ENCODE measurements at regions of chr4 and their contacts with region 1.

Region 1: DNA sequence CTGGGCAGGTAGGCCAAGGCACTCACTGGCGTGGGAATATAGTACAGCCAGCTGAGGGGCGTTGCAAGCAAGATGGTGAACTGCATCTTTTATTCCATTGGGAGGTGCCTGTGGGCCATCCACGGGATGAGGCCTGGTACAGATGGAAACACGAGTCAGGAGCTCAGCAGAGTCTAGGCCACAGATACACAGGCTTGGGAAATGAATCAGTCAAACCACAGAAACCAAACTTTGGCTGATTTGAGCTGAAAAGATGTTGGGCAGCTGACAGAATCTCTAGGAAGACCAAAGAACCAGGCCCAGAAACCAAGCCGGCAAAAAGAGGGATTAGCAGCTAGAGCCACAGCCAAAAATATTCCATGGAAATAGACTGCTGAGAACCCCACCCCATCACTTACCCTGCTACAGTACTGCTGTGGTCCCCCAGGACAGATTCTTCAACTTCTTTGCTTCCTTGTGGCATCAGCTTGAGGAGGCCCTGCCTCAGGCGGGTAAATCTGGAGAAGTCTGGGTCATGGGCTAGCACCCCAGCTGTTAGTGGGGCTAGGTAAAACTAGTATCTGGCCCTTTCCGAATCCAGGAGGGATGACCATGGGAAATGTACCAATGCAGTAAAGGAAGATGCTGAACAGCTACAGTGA is 75.4 kb downstream of the TMEM131L start:
- DNase-seq: peak; percentile 82
- H3K4me3 ChIP-seq: no peak overlapping the region
- CTCF ChIP-seq: peak; percentile 26

Region 2: GRCh38 chr4:153466081-153466948 is 75.3 kb before region 1 on chr4 and contains the start of gene TMEM131L:
- CTCF ChIA-PET with region 1: no interaction called
- POLR2A ChIA-PET with region 1: no interaction called
- DNase-seq: no peak
- H3K4me3 ChIP-seq: peak within 1 kb of the TSS; percentile 80
- CTCF ChIP-seq: no peak

Region 3: GRCh38 chr4:153531000-153531358 is 10.6 kb before region 1 on chr4:
- CTCF ChIA-PET with region 1: interaction called, 14 read pairs
- POLR2A ChIA-PET with region 1: no interaction called
- DNase-seq: no peak
- H3K4me3 ChIP-seq: no peak overlapping the region
- CTCF ChIP-seq: no peak

Measured in AG04449 (cell line).